ENCODE measurements at regions of chr11 and their contacts with region 1.

Region 1: GRCh38 chr11:9155930-9156329 is 64.5 kb upstream of the SCUBE2 start:
- DNase-seq: no peak
- H3K4me3 Mint-ChIP-seq: no peak overlapping the region
- H3K27ac Mint-ChIP-seq: no peak overlapping the region
- H3K4me1 Mint-ChIP-seq: peaks cover 15% of the 10 kb centered on the region
- H3K27me3 Mint-ChIP-seq: no peaks in the 10 kb centered on the region

Region 2: GRCh38 chr11:9001736-9002135 is 154.2 kb before region 1 on chr11:
- CTCF ChIA-PET with region 1: no interaction called
- POLR2A ChIA-PET with region 1: no interaction called
- DNase-seq: peak; percentile 52
- H3K4me3 Mint-ChIP-seq: no peak overlapping the region
- H3K27ac Mint-ChIP-seq: no peak overlapping the region
- H3K4me1 Mint-ChIP-seq: peaks cover 27% of the 10 kb centered on the region
- H3K27me3 Mint-ChIP-seq: peaks cover 39% of the 10 kb centered on the region

Region 3: DNA sequence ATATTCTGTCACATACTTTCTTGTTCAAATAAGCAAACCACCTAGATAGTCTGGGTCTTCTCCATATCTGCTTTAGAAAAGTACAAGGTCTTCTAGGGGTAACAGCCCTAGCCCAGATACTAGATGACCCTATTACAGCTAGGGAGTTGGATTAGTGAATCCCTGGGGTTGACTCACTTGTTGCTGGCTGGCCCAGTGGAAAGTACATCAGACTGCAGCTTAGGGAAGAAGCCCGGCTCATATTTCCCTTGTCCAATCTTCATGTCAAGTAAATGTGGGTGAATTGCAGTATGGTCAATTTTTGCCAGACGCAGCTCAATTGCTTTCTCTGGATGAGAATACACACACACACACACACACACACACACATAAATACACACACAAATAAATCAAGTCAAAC is 14.5 kb after region 1 on chr11:
- CTCF ChIA-PET with region 1: interaction called, 11 read pairs
- POLR2A ChIA-PET with region 1: no interaction called
- DNase-seq: no peak
- H3K4me3 Mint-ChIP-seq: no peak overlapping the region
- H3K27ac Mint-ChIP-seq: no peak overlapping the region
- H3K4me1 Mint-ChIP-seq: peaks cover 16% of the 10 kb centered on the region
- H3K27me3 Mint-ChIP-seq: no peaks in the 10 kb centered on the region

Region 4: DNA sequence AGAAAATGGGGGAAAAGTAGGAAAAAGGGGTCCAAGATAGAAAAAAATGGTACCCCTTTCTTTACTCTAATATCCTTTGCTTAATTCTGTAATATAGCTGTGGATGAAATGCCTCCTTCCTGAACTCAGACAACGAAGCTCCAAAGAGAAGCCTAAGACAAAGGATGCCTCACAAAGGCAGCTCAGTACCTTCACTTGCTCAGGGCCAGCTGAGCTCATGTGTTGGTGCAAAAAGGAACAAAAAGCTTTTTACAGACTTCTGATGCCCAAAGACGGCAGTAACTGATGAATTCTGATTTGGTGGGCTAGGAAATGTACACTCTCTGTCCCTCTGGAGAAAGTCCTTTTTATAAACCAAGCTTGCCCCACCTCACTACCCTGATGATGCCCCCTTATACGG is 31.7 kb after region 1 on chr11:
- CTCF ChIA-PET with region 1: no interaction called
- POLR2A ChIA-PET with region 1: no interaction called
- DNase-seq: no peak
- H3K4me3 Mint-ChIP-seq: no peak overlapping the region
- H3K27ac Mint-ChIP-seq: no peak overlapping the region
- H3K4me1 Mint-ChIP-seq: no peaks in the 10 kb centered on the region
- H3K27me3 Mint-ChIP-seq: no peaks in the 10 kb centered on the region

Measured in activated CD4-positive, alpha-beta memory T cell treated with anti-CD3 and anti-CD28 coated beads, Interleukin-2, amount 10 ng/mL, durations not matched to agents 7 days and 5 days (primary cell).